Heart right ventricle (tissue), 16 donors: ENCODE measurements at regions of chr1 and their contacts with region 1.

Region 1: GRCh38 chr1:151728151-151729054 is 7.1 kb downstream of the RIIAD1 start:
- DNase-seq: no peak
- ATAC-seq: peak; percentile 69 to 92 (median 88)
- H3K4me3 ChIP-seq: peak overlapping the region in 7 of 10 donors; percentile 13 to 37 (median 31)
- H3K27ac ChIP-seq: peak overlapping the region in 5 of 10 donors; percentile 21 to 60 (median 49)
- H3K4me1 ChIP-seq: peaks cover 0 to 12% (median 0%) of the 10 kb centered on the region in 9 donors
- H3K27me3 ChIP-seq: peaks cover 0 to 40% (median 4%) of the 10 kb centered on the region in 7 donors
- CTCF ChIP-seq: no peak

Region 2: GRCh38 chr1:151443846-151444782 is 284.3 kb before region 1 on chr1:
- intact Hi-C with region 1: loop called in 6 of 10 experiments (anchors 5 to 10 kb)
- DNase-seq: peak in 1 of 2 donors; percentile 64
- ATAC-seq: peak; percentile 62 to 91 (median 88)
- H3K4me3 ChIP-seq: no peak overlapping the region
- H3K27ac ChIP-seq: peak overlapping the region in 1 of 10 donors; percentile 43
- H3K4me1 ChIP-seq: peaks cover 3 to 66% (median 40%) of the 10 kb centered on the region in 9 donors
- H3K27me3 ChIP-seq: no peaks in the 10 kb centered on the region
- CTCF ChIP-seq: peak; percentile 30 to 83 (median 68)

Region 3: GRCh38 chr1:151539990-151540981 is 188.1 kb before region 1 on chr1 and contains the start of gene TUFT1:
- intact Hi-C with region 1: loop called in 4 of 10 experiments (anchors 5 to 10 kb)
- DNase-seq: peak; percentile 89 to 91
- ATAC-seq: peak; percentile 97 to 98 (median 98)
- H3K4me3 ChIP-seq: peak within 1 kb of the TSS; percentile 48 to 86 (median 70)
- H3K27ac ChIP-seq: peak within 1 kb of the TSS in 8 of 10 donors; percentile 30 to 79 (median 59)
- H3K4me1 ChIP-seq: peaks cover 0 to 24% (median 12%) of the 10 kb centered on the region in 9 donors
- H3K27me3 ChIP-seq: peaks cover 0 to 11% (median 0%) of the 10 kb centered on the region in 7 donors
- CTCF ChIP-seq: no peak
- total RNA-seq, gene TUFT1: 2.9 to 13.0 (median 5.5) TPM

Region 4: DNA sequence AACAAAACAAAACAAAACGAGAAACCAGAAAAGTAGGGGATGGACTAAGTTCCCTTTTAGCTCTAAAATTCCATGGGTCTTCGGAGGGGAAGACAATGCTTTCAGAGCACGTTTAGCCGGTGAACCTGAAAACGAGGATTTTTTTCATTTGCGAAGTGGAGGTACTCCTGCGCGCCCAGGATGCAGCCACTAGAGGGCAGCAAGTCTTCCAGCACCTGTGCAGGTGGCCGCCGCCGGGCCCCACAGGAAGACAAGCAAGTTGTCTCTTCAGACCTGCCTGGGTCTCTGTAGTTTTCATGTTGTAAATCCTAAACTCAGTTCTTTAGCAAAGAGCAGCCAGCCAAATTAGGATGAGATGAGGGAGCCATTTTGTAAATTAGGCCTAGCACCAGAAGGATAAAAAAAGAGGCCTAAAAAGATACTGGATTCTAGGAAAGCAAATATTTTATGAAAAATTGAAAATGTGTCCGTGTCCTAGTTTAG is 134.2 kb before region 1 on chr1:
- intact Hi-C with region 1: loop called in 5 of 10 experiments (anchors 5 to 10 kb)
- DNase-seq: peak; percentile 67 to 73
- ATAC-seq: peak in 6 of 8 donors; percentile 55 to 76 (median 62)
- H3K4me3 ChIP-seq: peak overlapping the region in 4 of 10 donors; percentile 15 to 30 (median 16)
- H3K27ac ChIP-seq: no peak overlapping the region
- H3K4me1 ChIP-seq: peaks cover 0 to 12% (median 0%) of the 10 kb centered on the region in 9 donors
- H3K27me3 ChIP-seq: no peaks in the 10 kb centered on the region
- CTCF ChIP-seq: peak; percentile 72 to 95 (median 92)

Region 5: GRCh38 chr1:151693076-151693651 is 35.2 kb before region 1 on chr1:
- intact Hi-C with region 1: loop called in 3 of 10 experiments (anchors 5 kb)
- DNase-seq: no peak
- ATAC-seq: no peak
- H3K4me3 ChIP-seq: no peak overlapping the region
- H3K27ac ChIP-seq: no peak overlapping the region
- H3K4me1 ChIP-seq: peaks cover 0 to 13% (median 0%) of the 10 kb centered on the region in 9 donors
- H3K27me3 ChIP-seq: no peaks in the 10 kb centered on the region
- CTCF ChIP-seq: peak in 7 of 9 donors; percentile 44 to 61 (median 53)

Region 6: DNA sequence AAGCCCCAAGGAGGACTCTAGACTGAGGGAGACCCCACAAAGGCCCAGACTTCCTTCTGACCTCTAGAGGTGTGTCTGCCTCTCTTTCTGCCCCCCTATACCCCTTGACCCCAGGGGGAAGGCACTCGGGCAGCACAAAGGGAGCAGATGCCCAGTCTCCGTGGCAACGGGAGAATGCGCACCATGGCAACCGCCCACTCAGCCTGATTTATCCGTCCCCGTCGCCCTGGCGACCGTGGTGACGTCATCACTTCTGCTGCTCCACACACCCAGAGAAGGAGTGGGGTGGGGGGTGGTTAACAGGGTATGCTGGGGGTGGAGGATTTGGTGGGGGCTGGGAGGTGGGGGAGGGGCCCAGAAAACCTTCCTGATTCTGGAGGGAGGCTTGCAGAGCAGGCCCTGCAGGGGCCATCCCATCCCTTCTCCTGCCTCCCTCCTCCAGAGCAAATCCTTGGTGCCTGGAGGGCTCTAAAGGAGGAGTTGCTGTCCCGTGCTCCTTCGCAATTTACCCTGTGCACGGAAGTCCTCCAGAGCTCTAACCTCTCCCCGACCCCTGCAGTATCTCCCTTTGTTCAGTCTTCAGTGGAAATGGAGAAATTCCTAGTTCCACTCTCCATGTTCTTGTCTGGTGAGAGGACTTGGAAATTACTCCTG is 18.1 kb before region 1 on chr1:
- intact Hi-C with region 1: loop called in 1 of 10 experiments (anchors 2 kb)
- DNase-seq: no peak
- ATAC-seq: no peak
- H3K4me3 ChIP-seq: no peak overlapping the region
- H3K27ac ChIP-seq: no peak overlapping the region
- H3K4me1 ChIP-seq: no peaks in the 10 kb centered on the region
- H3K27me3 ChIP-seq: peaks cover 0 to 32% (median 9%) of the 10 kb centered on the region in 7 donors
- CTCF ChIP-seq: no peak